Activated CD4-positive, alpha-beta memory T cell treated with anti-CD3 and anti-CD28 coated beads, Interleukin-2, amount 10 ng/mL, durations not matched to agents 7 days and 5 days (primary cell): ENCODE measurements at regions of chr20 and their contacts with region 1.

Region 1: DNA sequence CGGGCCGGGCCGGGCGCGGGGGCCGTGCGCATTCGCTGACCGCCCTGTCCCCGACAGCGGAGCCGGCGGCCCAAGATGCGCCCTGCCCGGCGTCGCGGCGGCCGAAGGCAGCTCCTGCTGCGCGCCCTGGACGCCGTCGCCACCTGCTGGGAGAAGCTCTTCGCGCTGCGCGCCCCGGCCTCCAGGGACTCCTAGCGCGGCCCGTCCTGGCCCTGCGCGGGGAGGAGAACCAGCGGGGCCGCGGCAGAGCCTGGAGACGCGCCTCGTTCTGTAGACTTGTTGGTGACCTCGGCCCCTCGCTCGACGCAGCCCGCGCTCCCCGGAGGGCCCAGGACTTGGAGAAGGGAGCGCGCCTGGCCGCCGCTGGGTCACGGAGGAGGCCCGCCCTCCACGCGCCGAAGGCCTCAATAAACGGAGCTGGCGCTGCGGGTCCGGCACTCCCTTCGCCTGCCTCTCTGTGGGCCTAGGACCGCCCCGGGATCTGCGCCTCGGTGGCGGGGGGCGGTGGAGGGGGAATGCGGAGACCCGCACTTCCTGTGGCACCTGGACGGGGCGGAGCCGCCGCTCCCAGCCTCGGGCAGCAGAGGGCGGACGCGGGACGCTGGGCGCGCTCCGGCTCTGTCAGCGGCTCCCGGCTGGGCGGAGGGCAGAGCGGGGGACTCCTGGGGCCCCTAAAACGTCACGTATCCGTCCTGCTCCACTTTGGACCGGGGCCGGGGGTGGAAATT is 2.7 kb downstream of the C20orf204 start:
- DNase-seq: peak; percentile 84
- H3K4me3 Mint-ChIP-seq: peak overlapping the region; percentile 68
- H3K27ac Mint-ChIP-seq: peak overlapping the region; percentile 35
- H3K4me1 Mint-ChIP-seq: peaks cover 68% of the 10 kb centered on the region
- H3K27me3 Mint-ChIP-seq: peaks cover 5% of the 10 kb centered on the region

Region 2: GRCh38 chr20:63973636-63974402 is 64.9 kb before region 1 on chr20:
- CTCF ChIA-PET with region 1: interaction called, 117 read pairs
- POLR2A ChIA-PET with region 1: interaction called, 83 read pairs
- DNase-seq: peak; percentile 79
- H3K4me3 Mint-ChIP-seq: no peak overlapping the region
- H3K27ac Mint-ChIP-seq: no peak overlapping the region
- H3K4me1 Mint-ChIP-seq: peaks cover 44% of the 10 kb centered on the region
- H3K27me3 Mint-ChIP-seq: no peaks in the 10 kb centered on the region

Region 3: DNA sequence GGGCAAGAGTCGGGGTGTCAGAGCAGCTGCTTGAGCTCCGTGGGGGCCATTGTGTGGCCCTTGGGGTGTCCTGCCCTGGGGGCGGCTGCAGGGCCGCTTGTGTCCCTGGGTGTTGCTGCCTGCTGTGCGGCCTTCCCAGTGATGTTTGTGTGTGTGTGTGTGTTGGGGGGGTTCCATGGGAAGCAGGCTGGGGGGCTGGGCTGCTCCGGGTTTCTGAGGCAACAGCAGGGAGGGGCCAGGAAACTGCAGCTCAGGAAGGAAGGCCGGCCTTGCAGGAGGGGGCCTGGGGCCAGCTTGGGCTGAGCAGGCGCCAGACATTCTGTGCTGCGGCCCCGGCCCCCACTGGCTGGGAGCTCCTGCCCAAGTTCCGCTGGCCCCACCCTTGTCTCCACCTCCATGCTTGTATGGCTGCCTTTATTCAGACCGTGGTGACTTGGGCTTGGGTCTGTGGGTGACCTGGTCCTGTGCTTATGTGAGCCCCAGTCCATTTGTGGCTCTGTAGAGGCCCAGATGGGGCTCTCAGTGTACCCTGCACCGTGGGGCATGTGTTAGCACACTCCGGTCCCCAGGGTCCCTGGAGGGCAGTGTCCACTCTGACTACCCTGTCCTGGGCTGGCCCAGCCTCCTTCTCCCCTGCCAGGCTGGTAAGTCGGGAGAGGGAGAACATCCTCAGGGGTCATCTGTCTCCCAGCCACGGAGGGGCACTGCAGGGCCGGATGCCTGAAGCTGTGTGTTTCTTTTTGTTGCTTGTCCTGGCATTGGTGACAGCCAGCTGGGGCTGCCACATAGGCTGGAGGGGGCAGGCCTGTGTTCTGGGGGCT is 15.3 kb after region 1 on chr20:
- CTCF ChIA-PET with region 1: interaction called, 19 read pairs
- POLR2A ChIA-PET with region 1: interaction called, 12 read pairs
- DNase-seq: no peak
- H3K4me3 Mint-ChIP-seq: no peak overlapping the region
- H3K27ac Mint-ChIP-seq: no peak overlapping the region
- H3K4me1 Mint-ChIP-seq: peaks cover 30% of the 10 kb centered on the region
- H3K27me3 Mint-ChIP-seq: peaks cover 25% of the 10 kb centered on the region

Region 4: GRCh38 chr20:64069614-64070243 is 31.0 kb after region 1 on chr20:
- CTCF ChIA-PET with region 1: interaction called, 6 read pairs
- POLR2A ChIA-PET with region 1: interaction called, 16 read pairs
- DNase-seq: peak; percentile 47
- H3K4me3 Mint-ChIP-seq: no peak overlapping the region
- H3K27ac Mint-ChIP-seq: no peak overlapping the region
- H3K4me1 Mint-ChIP-seq: peaks cover 57% of the 10 kb centered on the region
- H3K27me3 Mint-ChIP-seq: no peaks in the 10 kb centered on the region

Region 5: GRCh38 chr20:64101731-64102621 is 63.2 kb after region 1 on chr20:
- CTCF ChIA-PET with region 1: no interaction called
- POLR2A ChIA-PET with region 1: no interaction called
- DNase-seq: peak; percentile 64
- H3K4me3 Mint-ChIP-seq: no peak overlapping the region
- H3K27ac Mint-ChIP-seq: no peak overlapping the region
- H3K4me1 Mint-ChIP-seq: peaks cover 6% of the 10 kb centered on the region
- H3K27me3 Mint-ChIP-seq: peaks cover 20% of the 10 kb centered on the region

Region 6: GRCh38 chr20:64119681-64120341 is 81.1 kb after region 1 on chr20:
- CTCF ChIA-PET with region 1: interaction called, 17 read pairs
- POLR2A ChIA-PET with region 1: no interaction called
- DNase-seq: no peak
- H3K4me3 Mint-ChIP-seq: peak overlapping the region; percentile 37
- H3K27ac Mint-ChIP-seq: no peak overlapping the region
- H3K4me1 Mint-ChIP-seq: peaks cover 10% of the 10 kb centered on the region
- H3K27me3 Mint-ChIP-seq: peaks cover 18% of the 10 kb centered on the region